CD8-positive, alpha-beta T cell (primary cell): ENCODE measurements at regions of chr1 and their contacts with region 1.

Region 1: GRCh38 chr1:154335025-154335714 is 9.8 kb downstream of the ATP8B2 start:
- DNase-seq: peak; percentile 78 to 95 (median 93)
- ATAC-seq: peak; percentile 94
- H3K4me3 ChIP-seq: no peak overlapping the region
- H3K4me3 Mint-ChIP-seq: peak overlapping the region; percentile 48
- H3K27ac ChIP-seq: peak overlapping the region; percentile 22 to 75
- H3K27ac Mint-ChIP-seq: peak overlapping the region; percentile 95
- H3K4me1 ChIP-seq: peaks cover 78% of the 10 kb centered on the region
- H3K4me1 Mint-ChIP-seq: peaks cover 75% of the 10 kb centered on the region
- H3K27me3 ChIP-seq: no peaks in the 10 kb centered on the region
- H3K27me3 Mint-ChIP-seq: no peaks in the 10 kb centered on the region
- CTCF ChIP-seq: peak; percentile 88

Region 2: GRCh38 chr1:154198756-154199562 is 136.2 kb before region 1 on chr1:
- CTCF ChIA-PET with region 1: interaction called, 36 read pairs
- POLR2A ChIA-PET with region 1: no interaction called
- intact Hi-C with region 1: loop called in 1 of 2 experiments (anchors 1 kb)
- DNase-seq: peak in 6 of 9 experiments; percentile 41 to 81 (median 52)
- ATAC-seq: peak; percentile 97
- H3K4me3 ChIP-seq: no peak overlapping the region
- H3K4me3 Mint-ChIP-seq: no peak overlapping the region
- H3K27ac ChIP-seq: no peak overlapping the region
- H3K27ac Mint-ChIP-seq: no peak overlapping the region
- H3K4me1 ChIP-seq: peaks cover 9% of the 10 kb centered on the region
- H3K4me1 Mint-ChIP-seq: no peaks in the 10 kb centered on the region
- H3K27me3 ChIP-seq: no peaks in the 10 kb centered on the region
- H3K27me3 Mint-ChIP-seq: peaks cover 3% of the 10 kb centered on the region
- CTCF ChIP-seq: peak; percentile 63

Region 3: GRCh38 chr1:154344977-154345837 is 10.0 kb after region 1 on chr1:
- CTCF ChIA-PET with region 1: interaction called, 184 read pairs
- POLR2A ChIA-PET with region 1: interaction called, 40 read pairs
- intact Hi-C with region 1: loop called in 1 of 2 experiments (anchors 1 kb)
- DNase-seq: peak; percentile 59 to 88 (median 81)
- ATAC-seq: peak; percentile 48
- H3K4me3 ChIP-seq: peak overlapping the region; percentile 58 to 66
- H3K4me3 Mint-ChIP-seq: peak overlapping the region; percentile 87
- H3K27ac ChIP-seq: peak overlapping the region; percentile 8 to 77
- H3K27ac Mint-ChIP-seq: peak overlapping the region; percentile 81
- H3K4me1 ChIP-seq: peaks cover 70% of the 10 kb centered on the region
- H3K4me1 Mint-ChIP-seq: peaks cover 80% of the 10 kb centered on the region
- H3K27me3 ChIP-seq: no peaks in the 10 kb centered on the region
- H3K27me3 Mint-ChIP-seq: no peaks in the 10 kb centered on the region
- CTCF ChIP-seq: peak; percentile 66

Region 4: GRCh38 chr1:154361357-154361756 is 26.2 kb after region 1 on chr1:
- CTCF ChIA-PET with region 1: interaction called, 11 read pairs
- POLR2A ChIA-PET with region 1: interaction called, 3 read pairs
- intact Hi-C with region 1: no loop called
- DNase-seq: no peak
- ATAC-seq: no peak
- H3K4me3 ChIP-seq: no peak overlapping the region
- H3K4me3 Mint-ChIP-seq: no peak overlapping the region
- H3K27ac ChIP-seq: no peak overlapping the region
- H3K27ac Mint-ChIP-seq: no peak overlapping the region
- H3K4me1 ChIP-seq: no peaks in the 10 kb centered on the region
- H3K4me1 Mint-ChIP-seq: no peaks in the 10 kb centered on the region
- H3K27me3 ChIP-seq: no peaks in the 10 kb centered on the region
- H3K27me3 Mint-ChIP-seq: no peaks in the 10 kb centered on the region
- CTCF ChIP-seq: no peak

Region 5: GRCh38 chr1:154463512-154463990 is 128.4 kb after region 1 on chr1:
- CTCF ChIA-PET with region 1: no interaction called
- POLR2A ChIA-PET with region 1: no interaction called
- intact Hi-C with region 1: no loop called
- DNase-seq: peak; percentile 13 to 79 (median 56)
- ATAC-seq: peak; percentile 80
- H3K4me3 ChIP-seq: no peak overlapping the region
- H3K4me3 Mint-ChIP-seq: peak overlapping the region; percentile 40
- H3K27ac ChIP-seq: peak overlapping the region in 1 of 2 experiments; percentile 86
- H3K27ac Mint-ChIP-seq: peak overlapping the region; percentile 90
- H3K4me1 ChIP-seq: peaks cover 37% of the 10 kb centered on the region
- H3K4me1 Mint-ChIP-seq: peaks cover 49% of the 10 kb centered on the region
- H3K27me3 ChIP-seq: no peaks in the 10 kb centered on the region
- H3K27me3 Mint-ChIP-seq: no peaks in the 10 kb centered on the region
- CTCF ChIP-seq: no peak